Breast epithelium (tissue), 4 donors: ENCODE measurements at regions of chr7 and their contacts with region 1.

Region 1: DNA sequence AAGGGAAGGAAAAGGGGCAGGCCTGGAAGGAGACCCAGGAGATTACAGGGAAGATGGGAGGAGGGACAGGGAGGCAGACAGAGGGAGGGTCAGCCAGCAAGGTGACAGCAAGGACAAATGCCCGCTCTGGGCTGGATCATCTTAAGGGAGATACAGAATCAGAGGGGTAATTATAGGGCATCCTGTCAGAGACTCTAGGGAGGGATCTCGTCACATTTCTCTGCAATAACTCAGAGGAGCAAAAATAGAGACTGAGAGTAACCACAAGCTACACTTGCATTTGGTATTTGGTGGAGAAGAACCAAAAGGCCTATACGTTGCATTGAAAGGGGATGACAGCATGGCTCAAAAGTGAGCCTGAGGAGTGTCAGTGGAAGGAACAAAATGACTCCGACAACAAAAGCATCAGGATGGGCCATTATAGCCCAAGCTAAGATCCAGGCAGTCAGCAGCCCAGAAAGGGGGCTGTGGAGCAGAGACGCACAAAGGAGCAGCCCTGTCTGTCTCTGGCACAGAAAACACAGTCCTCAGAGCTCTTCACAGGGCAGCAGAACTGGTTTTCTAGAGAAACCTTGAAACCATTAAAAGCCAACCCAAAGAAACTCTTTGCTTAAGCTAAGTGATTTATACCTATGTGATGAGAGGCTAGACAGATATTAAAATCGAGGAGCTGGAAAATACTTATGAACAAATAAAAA is 430.2 kb upstream of the VSTM2A start:
- DNase-seq: no peak
- H3K4me3 ChIP-seq: no peak overlapping the region
- H3K27ac ChIP-seq: no peak overlapping the region
- H3K4me1 ChIP-seq: no peaks in the 10 kb centered on the region
- H3K27me3 ChIP-seq: no peaks in the 10 kb centered on the region
- CTCF ChIP-seq: no peak
- POLR2A ChIP-seq: no peak

Region 2: DNA sequence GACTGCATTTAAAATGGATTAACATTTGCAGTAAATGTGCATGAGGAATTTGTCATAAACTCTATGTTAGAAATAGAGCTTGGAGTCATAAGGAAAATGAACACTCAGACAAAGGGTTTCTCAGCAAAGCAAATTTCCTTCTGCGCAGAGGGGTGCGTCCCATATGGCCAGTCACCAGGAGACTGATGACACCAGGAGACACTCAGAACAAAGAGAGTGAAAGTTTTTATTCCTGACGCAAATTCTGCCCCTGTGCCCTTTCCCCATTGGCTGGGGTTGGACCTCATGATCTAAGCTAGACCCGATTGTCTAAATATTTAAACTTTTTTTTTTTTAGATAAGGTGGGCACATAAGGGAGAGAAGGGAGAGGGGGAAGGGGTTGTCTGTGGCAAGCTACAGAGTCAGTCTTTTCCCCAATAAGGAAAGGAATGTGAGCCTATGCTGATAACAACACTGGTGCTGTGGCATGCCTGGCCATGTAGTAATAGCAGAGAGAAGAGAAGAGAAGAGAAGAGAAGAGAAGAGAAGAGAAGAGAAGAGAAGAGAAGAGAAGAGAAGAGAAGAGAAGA is 874.5 kb before region 1 on chr7:
- intact Hi-C with region 1: loop called (anchors 10 kb)
- DNase-seq: no peak
- H3K4me3 ChIP-seq: no peak overlapping the region
- H3K27ac ChIP-seq: no peak overlapping the region
- H3K4me1 ChIP-seq: no peaks in the 10 kb centered on the region
- H3K27me3 ChIP-seq: no peaks in the 10 kb centered on the region
- CTCF ChIP-seq: no peak
- POLR2A ChIP-seq: no peak

Region 3: DNA sequence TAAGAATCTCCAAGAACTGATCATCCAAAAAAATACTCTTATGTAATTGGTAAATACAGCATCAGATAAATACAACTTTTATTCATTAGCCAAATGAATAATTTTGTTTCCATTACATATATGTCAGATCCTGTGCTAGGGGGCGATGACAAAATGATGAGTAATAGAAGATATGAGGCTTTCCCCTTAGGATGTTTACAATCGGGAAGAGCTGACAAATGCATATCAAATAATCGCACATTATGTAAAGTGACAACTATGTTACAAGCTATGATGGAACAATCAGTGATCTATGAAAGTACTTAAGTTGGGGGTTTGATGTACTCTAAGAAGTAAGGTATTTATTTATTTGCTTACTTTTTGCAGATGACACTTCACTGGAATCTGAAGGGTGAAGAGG is 35.3 kb before region 1 on chr7:
- intact Hi-C with region 1: no loop called
- DNase-seq: no peak
- H3K4me3 ChIP-seq: no peak overlapping the region
- H3K27ac ChIP-seq: no peak overlapping the region
- H3K4me1 ChIP-seq: no peaks in the 10 kb centered on the region
- H3K27me3 ChIP-seq: no peaks in the 10 kb centered on the region
- CTCF ChIP-seq: no peak
- POLR2A ChIP-seq: no peak

Region 4: GRCh38 chr7:54326592-54327167 is 214.7 kb after region 1 on chr7:
- intact Hi-C with region 1: no loop called
- DNase-seq: no peak
- H3K4me3 ChIP-seq: no peak overlapping the region
- H3K27ac ChIP-seq: no peak overlapping the region
- H3K4me1 ChIP-seq: no peaks in the 10 kb centered on the region
- H3K27me3 ChIP-seq: no peaks in the 10 kb centered on the region
- CTCF ChIP-seq: no peak
- POLR2A ChIP-seq: no peak